ENCODE measurements at regions of chr17 and their contacts with region 1.

Region 1: GRCh38 chr17:82494236-82495055 is 25.1 kb upstream of the FOXK2 start:
- DNase-seq: peak; percentile 93
- ATAC-seq: peak; percentile 80
- H3K4me3 Mint-ChIP-seq: peak overlapping the region; percentile 60
- H3K27ac Mint-ChIP-seq: peak overlapping the region; percentile 76
- H3K4me1 Mint-ChIP-seq: peaks cover 14% of the 10 kb centered on the region
- H3K27me3 Mint-ChIP-seq: no peaks in the 10 kb centered on the region

Region 2: DNA sequence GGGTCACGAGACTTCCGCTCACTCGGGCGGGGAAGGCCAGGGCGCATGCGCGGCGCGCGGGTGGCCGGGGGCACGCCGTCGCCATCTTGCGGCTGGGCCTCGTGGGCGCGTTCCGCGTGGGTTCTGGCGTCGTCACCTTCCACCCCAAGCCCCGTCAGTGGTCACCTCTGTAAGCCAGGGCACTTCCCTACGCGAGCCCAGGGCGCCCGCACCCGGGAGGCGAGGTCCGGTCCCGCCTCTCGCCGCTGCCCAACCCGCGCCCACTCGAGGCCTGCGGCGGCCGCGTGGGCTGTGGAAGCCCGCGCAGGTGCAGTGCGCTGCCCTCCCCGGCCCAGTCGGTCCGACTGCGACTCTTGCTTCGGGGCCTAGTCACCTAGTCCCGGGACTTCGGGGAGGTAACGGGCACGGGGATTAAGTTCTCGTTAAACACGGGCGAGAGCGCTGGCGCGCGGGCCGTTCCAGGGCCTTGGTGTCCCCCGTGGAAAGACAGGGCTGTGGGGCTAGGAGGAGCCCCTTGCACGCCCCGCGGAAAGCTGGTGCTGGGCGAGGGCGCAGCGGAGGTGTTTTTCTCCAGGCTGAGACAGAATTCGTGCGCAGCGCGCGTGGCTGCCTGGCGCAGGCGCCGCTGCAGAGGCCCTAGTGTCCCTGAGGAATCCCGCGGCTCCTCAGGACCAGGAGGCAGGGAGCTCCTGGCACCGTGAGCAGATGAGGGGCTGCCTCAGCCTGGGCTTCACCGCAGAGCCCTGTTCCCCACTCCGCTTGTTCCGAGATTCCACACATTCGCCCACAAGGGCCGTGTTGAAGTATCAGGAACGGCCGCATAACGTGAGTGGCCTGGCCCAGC is 622.8 kb before region 1 on chr17:
- CTCF ChIA-PET with region 1: no interaction called
- POLR2A ChIA-PET with region 1: no interaction called
- intact Hi-C with region 1: loop called in 1 of 2 experiments (anchors 2 kb)
- DNase-seq: peak; percentile 98
- ATAC-seq: no peak
- H3K4me3 Mint-ChIP-seq: peak overlapping the region; percentile 81
- H3K27ac Mint-ChIP-seq: peak overlapping the region; percentile 92
- H3K4me1 Mint-ChIP-seq: peaks cover 34% of the 10 kb centered on the region
- H3K27me3 Mint-ChIP-seq: no peaks in the 10 kb centered on the region

Region 3: DNA sequence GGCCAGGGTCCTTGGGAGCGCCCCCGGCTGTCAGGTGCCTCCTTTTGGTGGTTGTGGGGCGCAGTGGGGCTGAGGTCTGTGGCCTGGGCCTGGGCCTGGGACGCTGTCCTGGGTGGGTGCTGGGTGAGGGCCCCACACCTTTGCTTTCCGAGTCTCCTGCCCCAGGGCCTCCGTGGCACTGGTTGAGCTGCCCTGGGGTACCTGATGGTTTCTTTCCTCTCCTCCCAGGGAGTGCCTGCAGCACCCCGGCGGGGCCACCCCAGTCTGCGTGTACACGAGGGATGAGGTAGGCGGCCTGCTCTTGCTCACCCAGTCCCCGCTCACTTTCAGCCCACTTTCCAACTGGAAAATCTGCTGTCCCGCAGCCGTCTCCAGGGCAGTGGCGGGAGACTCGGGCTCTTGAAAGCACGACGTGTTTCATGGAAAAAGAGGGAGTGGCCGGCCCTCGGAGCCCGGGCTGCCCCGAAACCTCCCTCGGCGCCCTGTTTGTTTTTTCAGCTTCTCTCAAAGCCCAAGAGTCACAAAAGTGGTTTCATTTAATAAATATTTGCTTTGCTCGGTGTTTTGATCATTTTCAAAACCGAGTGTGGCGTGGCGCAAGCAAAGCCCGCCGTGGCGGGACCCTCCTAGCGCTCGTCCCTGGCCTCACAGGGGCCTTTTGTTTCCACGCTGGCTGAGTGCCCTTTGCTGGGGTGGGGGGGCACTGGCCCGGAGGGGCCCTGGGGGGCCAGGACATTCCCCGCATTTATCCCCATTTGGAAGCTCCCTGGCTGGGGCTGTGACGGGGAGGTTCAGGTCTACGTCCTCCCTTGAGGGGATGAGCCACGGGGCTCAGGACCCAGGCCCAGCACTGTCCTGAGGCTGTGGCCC is 499.6 kb before region 1 on chr17:
- CTCF ChIA-PET with region 1: no interaction called
- POLR2A ChIA-PET with region 1: no interaction called
- intact Hi-C with region 1: no loop called
- DNase-seq: no peak
- ATAC-seq: no peak
- H3K4me3 Mint-ChIP-seq: no peak overlapping the region
- H3K27ac Mint-ChIP-seq: no peak overlapping the region
- H3K4me1 Mint-ChIP-seq: no peaks in the 10 kb centered on the region
- H3K27me3 Mint-ChIP-seq: no peaks in the 10 kb centered on the region

Region 4: GRCh38 chr17:82030470-82031302 is 463.8 kb before region 1 on chr17:
- CTCF ChIA-PET with region 1: no interaction called
- POLR2A ChIA-PET with region 1: no interaction called
- intact Hi-C with region 1: loop called in 1 of 2 experiments (anchors 5 kb)
- DNase-seq: peak; percentile 92
- ATAC-seq: peak; percentile 79
- H3K4me3 Mint-ChIP-seq: peak overlapping the region; percentile 67
- H3K27ac Mint-ChIP-seq: no peak overlapping the region
- H3K4me1 Mint-ChIP-seq: peaks cover 13% of the 10 kb centered on the region
- H3K27me3 Mint-ChIP-seq: no peaks in the 10 kb centered on the region

Region 5: GRCh38 chr17:82241183-82241925 is 253.1 kb before region 1 on chr17:
- CTCF ChIA-PET with region 1: no interaction called
- POLR2A ChIA-PET with region 1: no interaction called
- intact Hi-C with region 1: no loop called
- DNase-seq: peak; percentile 90
- ATAC-seq: peak; percentile 63
- H3K4me3 Mint-ChIP-seq: peak overlapping the region; percentile 12
- H3K27ac Mint-ChIP-seq: peak overlapping the region; percentile 83
- H3K4me1 Mint-ChIP-seq: peaks cover 60% of the 10 kb centered on the region
- H3K27me3 Mint-ChIP-seq: no peaks in the 10 kb centered on the region

Region 6: DNA sequence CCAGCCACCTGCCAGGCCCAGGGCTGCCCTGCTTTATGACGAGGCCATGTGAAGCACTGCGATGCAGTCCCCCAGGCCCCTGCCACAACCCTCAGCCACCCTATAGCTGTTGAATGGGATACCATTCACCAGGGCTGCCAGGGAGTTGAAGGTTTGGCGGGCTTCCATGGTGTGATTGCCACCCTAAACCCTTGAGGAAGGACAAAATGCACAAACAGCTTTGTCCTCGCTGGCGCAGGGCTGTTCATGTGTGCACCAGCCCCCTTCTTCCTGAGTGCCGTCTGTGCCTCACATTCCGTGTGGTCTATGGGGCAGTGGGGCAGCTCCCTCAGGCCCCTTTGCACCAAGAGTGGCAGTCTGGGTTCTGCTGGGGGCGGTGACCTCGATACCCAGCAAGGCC is 10.6 kb before region 1 on chr17:
- CTCF ChIA-PET with region 1: no interaction called
- POLR2A ChIA-PET with region 1: no interaction called
- intact Hi-C with region 1: no loop called
- DNase-seq: no peak
- ATAC-seq: no peak
- H3K4me3 Mint-ChIP-seq: no peak overlapping the region
- H3K27ac Mint-ChIP-seq: no peak overlapping the region
- H3K4me1 Mint-ChIP-seq: peaks cover 8% of the 10 kb centered on the region
- H3K27me3 Mint-ChIP-seq: no peaks in the 10 kb centered on the region

Region 7: GRCh38 chr17:82551779-82552457 is 57.5 kb after region 1 on chr17:
- CTCF ChIA-PET with region 1: interaction called, 7 read pairs
- POLR2A ChIA-PET with region 1: no interaction called
- intact Hi-C with region 1: loop called (anchors 1 to 5 kb)
- DNase-seq: peak; percentile 90
- ATAC-seq: peak; percentile 100
- H3K4me3 Mint-ChIP-seq: no peak overlapping the region
- H3K27ac Mint-ChIP-seq: peak overlapping the region; percentile 56
- H3K4me1 Mint-ChIP-seq: peaks cover 41% of the 10 kb centered on the region
- H3K27me3 Mint-ChIP-seq: no peaks in the 10 kb centered on the region

Measured in activated CD4-positive, alpha-beta T cell treated with anti-CD3 and anti-CD28 coated beads for 36 hours (primary cell).